ENCODE measurements at regions of chr3 and their contacts with region 1.

Region 1: GRCh38 chr3:170726976-170727661 is 141.2 kb upstream of the SLC7A14 start:
- DNase-seq: peak; percentile 94
- ATAC-seq: peak; percentile 59
- H3K4me3 ChIP-seq: no peak overlapping the region
- H3K27ac ChIP-seq: peak overlapping the region; percentile 99
- H3K4me1 ChIP-seq: peaks cover 26% of the 10 kb centered on the region
- H3K27me3 ChIP-seq: no peaks in the 10 kb centered on the region
- CTCF ChIP-seq: no peak
- POLR2A ChIP-seq: no peak
- RAD21 ChIP-seq: peak; percentile 17; the same call in 1 of the 2 replicates

Region 2: GRCh38 chr3:170144437-170144843 is 582.7 kb before region 1 on chr3:
- CTCF ChIA-PET with region 1: no interaction called
- POLR2A ChIA-PET with region 1: no interaction called
- dilution Hi-C with region 1: no loop called
- in situ Hi-C with region 1: no loop called
- intact Hi-C with region 1: no loop called
- DNase-seq: no peak
- ATAC-seq: no peak
- H3K4me3 ChIP-seq: no peak overlapping the region
- H3K27ac ChIP-seq: no peak overlapping the region
- H3K4me1 ChIP-seq: no peaks in the 10 kb centered on the region
- H3K27me3 ChIP-seq: no peaks in the 10 kb centered on the region
- CTCF ChIP-seq: no peak
- POLR2A ChIP-seq: no peak
- RAD21 ChIP-seq: no peak

Region 3: GRCh38 chr3:170419557-170420087 is 307.5 kb before region 1 on chr3:
- CTCF ChIA-PET with region 1: interaction called, 3 read pairs
- POLR2A ChIA-PET with region 1: no interaction called
- dilution Hi-C with region 1: no loop called
- in situ Hi-C with region 1: no loop called
- intact Hi-C with region 1: loop called (anchors 1 kb)
- DNase-seq: peak; percentile 41
- ATAC-seq: peak; percentile 30
- H3K4me3 ChIP-seq: peak overlapping the region; percentile 85
- H3K27ac ChIP-seq: peak overlapping the region; percentile 84
- H3K4me1 ChIP-seq: peaks cover 6% of the 10 kb centered on the region
- H3K27me3 ChIP-seq: no peaks in the 10 kb centered on the region
- CTCF ChIP-seq: 0 out of 2 replicates have a peak, but pooled peaks have one; percentile 2
- POLR2A ChIP-seq: no peak
- RAD21 ChIP-seq: no peak

Region 4: GRCh38 chr3:170740726-170741591 is 13.8 kb after region 1 on chr3:
- CTCF ChIA-PET with region 1: interaction called, 8 read pairs
- POLR2A ChIA-PET with region 1: interaction called, 3 read pairs
- dilution Hi-C with region 1: no loop called
- in situ Hi-C with region 1: no loop called
- intact Hi-C with region 1: loop called (anchors 2 kb)
- DNase-seq: peak; percentile 72
- ATAC-seq: peak; percentile 54
- H3K4me3 ChIP-seq: no peak overlapping the region
- H3K27ac ChIP-seq: peak overlapping the region; percentile 88
- H3K4me1 ChIP-seq: peaks cover 22% of the 10 kb centered on the region
- H3K27me3 ChIP-seq: no peaks in the 10 kb centered on the region
- CTCF ChIP-seq: no peak
- POLR2A ChIP-seq: no peak
- RAD21 ChIP-seq: no peak

Region 5: DNA sequence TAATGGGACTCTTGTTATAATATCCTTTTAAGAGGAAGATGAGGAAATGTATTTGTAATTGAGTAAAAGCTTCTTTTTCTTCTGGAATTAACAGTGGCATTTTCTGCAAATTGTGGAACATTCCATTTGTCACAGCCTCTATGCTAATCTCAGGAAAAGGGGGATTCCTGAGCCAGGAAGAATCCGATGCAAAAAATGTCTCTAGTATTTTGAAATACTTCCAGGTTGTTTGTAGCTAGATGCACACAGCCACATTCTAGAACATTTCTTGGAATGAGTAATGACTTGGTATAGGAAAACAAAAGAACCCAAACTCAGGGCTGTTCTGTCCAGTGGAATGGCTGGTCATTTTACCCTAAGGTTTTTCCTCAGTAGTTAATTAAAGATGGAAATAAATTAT is 397.9 kb after region 1 on chr3:
- CTCF ChIA-PET with region 1: no interaction called
- POLR2A ChIA-PET with region 1: no interaction called
- dilution Hi-C with region 1: no loop called
- in situ Hi-C with region 1: no loop called
- intact Hi-C with region 1: no loop called
- DNase-seq: peak; percentile 51
- ATAC-seq: peak; percentile 65
- H3K4me3 ChIP-seq: no peak overlapping the region
- H3K27ac ChIP-seq: no peak overlapping the region
- H3K4me1 ChIP-seq: no peaks in the 10 kb centered on the region; the same call in 1 of the 2 replicates
- H3K27me3 ChIP-seq: no peaks in the 10 kb centered on the region
- CTCF ChIP-seq: no peak
- POLR2A ChIP-seq: no peak
- RAD21 ChIP-seq: no peak

Measured in IMR-90 (cell line).